ENCODE measurements at regions of chr9 and their contacts with region 1.

Region 1: DNA sequence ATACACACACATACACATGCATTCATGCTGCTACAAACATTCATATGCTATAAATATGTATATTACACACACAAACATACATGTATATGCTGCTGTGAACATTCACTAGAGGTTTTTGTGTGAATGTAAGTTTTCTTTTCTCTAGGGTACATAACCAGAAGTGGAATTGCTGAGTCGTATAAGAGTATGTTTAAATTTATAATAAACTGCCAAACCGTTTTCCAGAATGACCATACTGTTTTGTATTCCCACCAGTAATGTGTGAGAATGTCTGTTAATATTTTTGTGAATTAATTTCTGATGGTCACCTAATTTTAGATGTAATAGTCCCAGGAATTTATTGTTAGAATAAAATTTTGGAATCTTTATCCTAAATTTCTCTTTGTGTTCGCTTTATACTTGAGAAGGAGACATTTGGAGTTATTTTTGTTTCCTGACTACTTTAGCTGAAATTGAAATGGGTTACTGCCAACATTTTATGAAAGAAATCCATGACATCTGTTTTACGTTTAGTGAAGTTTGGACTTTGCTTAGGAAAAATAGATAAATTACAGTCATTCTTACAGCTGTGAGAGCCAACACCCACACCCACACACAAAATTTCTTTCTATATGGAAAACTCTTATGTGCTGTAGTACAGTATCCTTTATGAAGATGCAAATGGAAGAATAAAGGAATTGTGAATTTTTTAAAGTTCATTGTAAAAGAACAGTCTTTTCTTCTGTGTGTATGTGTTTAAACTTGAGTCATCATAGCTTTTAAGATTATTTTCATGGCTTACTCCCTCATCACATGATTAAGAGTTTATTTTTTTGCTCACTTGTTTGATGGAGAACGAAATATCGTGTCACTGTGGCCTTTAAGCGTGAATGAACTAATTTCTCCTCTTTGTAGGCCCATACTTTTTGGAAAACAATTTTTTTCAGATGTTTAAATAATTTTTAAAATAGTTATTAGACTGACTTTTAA is 24.3 kb downstream of the CENPP start:
- DNase-seq: no peak
- H3K4me3 ChIP-seq: no peak overlapping the region
- H3K27ac ChIP-seq: peak overlapping the region; percentile 80
- H3K4me1 ChIP-seq: peaks cover 7% of the 10 kb centered on the region
- H3K27me3 ChIP-seq: no peaks in the 10 kb centered on the region
- CTCF ChIP-seq: no peak
- POLR2A ChIP-seq: no peak

Region 2: DNA sequence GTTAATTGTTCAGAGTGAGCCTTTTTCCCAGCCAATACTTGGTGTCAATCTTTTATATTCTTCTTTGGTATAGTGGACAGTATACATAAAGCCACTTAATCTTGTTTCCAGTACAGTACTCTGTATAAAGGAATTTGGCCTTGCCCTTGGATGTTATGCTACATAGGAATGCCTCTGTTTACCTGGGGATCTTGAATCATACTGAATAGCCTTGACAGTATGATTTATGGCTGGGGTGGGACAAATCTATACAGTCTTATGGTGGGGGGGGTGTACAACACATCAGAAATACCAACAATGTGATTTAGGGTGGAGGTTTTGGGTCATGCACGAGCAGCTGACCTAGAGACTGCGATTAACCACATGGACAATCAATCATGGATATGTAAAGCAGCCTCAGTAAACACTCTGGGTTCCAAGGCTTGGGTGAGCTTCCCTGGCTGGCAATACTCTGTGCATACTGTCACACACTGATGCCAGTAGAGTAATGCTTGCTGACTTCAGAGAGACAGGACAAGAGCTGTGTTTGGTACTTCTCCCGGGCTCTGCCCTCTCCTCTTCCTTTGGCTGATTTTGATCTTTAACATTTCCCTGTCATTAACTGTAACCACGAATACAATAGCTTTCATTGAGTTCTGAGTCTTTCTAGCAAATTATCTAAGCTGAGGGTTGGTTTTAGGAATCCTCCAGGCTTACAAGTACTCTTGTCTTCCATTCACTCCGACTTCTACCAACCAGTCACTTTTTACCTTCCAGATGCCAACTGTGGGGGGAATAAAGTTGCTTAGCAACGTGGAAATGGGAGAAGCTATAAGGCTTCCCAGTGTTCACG is 141.1 kb before region 1 on chr9:
- intact Hi-C with region 1: no loop called
- DNase-seq: no peak
- H3K4me3 ChIP-seq: no peak overlapping the region
- H3K27ac ChIP-seq: no peak overlapping the region
- H3K4me1 ChIP-seq: no peaks in the 10 kb centered on the region
- H3K27me3 ChIP-seq: no peaks in the 10 kb centered on the region
- CTCF ChIP-seq: no peak
- POLR2A ChIP-seq: no peak

Region 3: DNA sequence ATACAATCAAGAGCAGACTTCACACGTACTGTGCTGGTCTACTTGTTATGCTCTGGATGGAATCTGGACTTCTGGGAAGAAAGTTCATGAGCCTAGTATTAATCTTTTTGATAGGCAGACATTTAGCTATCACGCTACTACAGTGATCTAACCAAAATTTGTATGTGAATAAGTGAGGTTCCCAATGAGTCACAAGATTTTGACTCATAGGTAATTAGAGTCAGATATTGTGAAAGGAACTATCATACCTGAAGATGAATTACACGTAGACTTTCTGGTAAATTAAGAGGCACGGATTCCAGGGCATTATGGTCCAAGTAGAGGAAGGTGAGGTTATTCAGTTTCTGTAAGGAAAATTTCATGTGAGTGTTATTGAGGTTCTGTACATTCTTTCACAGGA is 35.9 kb after region 1 on chr9:
- intact Hi-C with region 1: no loop called
- DNase-seq: no peak
- H3K4me3 ChIP-seq: no peak overlapping the region
- H3K27ac ChIP-seq: no peak overlapping the region
- H3K4me1 ChIP-seq: no peaks in the 10 kb centered on the region
- H3K27me3 ChIP-seq: no peaks in the 10 kb centered on the region
- CTCF ChIP-seq: no peak
- POLR2A ChIP-seq: no peak

Region 4: DNA sequence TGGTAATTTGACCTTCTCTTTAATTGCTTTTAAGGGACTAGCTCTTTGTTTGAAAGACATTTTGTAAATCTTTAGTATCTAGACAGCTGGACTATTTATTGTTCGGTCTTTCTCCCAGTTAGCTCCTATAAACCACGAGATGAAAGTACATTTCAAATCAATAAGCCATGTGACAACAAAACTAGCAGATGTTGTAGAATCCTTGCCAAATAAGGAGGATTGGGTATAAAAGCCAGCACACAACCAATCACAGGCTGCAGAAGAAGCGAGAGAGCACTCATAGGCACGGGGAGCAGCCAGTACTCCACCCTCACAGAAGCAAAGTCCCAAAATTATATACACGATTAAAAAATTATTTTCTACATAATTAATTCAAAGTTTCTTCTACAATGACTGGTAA is 82.3 kb after region 1 on chr9:
- intact Hi-C with region 1: loop called (anchors 5 kb)
- DNase-seq: no peak
- H3K4me3 ChIP-seq: peak overlapping the region in 1 of 2 donors; percentile 3
- H3K27ac ChIP-seq: peak overlapping the region; percentile 49
- H3K4me1 ChIP-seq: no peaks in the 10 kb centered on the region
- H3K27me3 ChIP-seq: no peaks in the 10 kb centered on the region
- CTCF ChIP-seq: no peak
- POLR2A ChIP-seq: no peak

Region 5: GRCh38 chr9:92607773-92608172 is 257.7 kb after region 1 on chr9:
- intact Hi-C with region 1: no loop called
- DNase-seq: no peak
- H3K4me3 ChIP-seq: no peak overlapping the region
- H3K27ac ChIP-seq: peak overlapping the region; percentile 70
- H3K4me1 ChIP-seq: peaks cover 61% of the 10 kb centered on the region
- H3K27me3 ChIP-seq: no peaks in the 10 kb centered on the region
- CTCF ChIP-seq: no peak
- POLR2A ChIP-seq: no peak

Region 6: DNA sequence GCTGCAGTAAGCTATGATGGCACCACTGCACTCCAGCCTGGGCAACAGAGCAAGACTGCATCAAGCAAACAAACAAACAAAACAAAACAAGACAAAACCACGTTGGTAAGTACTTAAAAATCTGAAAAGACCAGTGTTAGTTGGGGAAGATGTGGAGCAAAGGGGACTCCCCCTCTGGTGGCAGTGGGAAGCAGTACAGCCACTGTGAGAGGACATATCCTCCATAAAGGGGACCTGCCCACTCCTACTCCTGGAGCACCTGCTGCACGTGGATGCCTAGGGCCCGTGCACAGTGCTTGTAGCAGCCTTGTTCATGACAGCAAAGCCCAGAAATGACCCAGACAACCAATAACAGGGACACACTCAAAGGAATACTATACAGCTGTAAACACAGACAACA is 336.9 kb after region 1 on chr9:
- intact Hi-C with region 1: no loop called
- DNase-seq: no peak
- H3K4me3 ChIP-seq: no peak overlapping the region
- H3K27ac ChIP-seq: no peak overlapping the region
- H3K4me1 ChIP-seq: peaks cover 2% of the 10 kb centered on the region
- H3K27me3 ChIP-seq: no peaks in the 10 kb centered on the region
- CTCF ChIP-seq: no peak
- POLR2A ChIP-seq: no peak